ENCODE measurements at regions of chr10 and their contacts with region 1.

Region 1: GRCh38 chr10:29598851-29599311 is 35.9 kb downstream of the SVIL start:
- DNase-seq: no peak
- ATAC-seq: peak; percentile 78
- H3K4me3 ChIP-seq: no peak overlapping the region
- H3K27ac ChIP-seq: peak overlapping the region in 1 of 2 donors; percentile 87
- H3K4me1 ChIP-seq: peaks cover 6 to 12% of the 10 kb centered on the region in 2 donors
- H3K27me3 ChIP-seq: no peaks in the 10 kb centered on the region

Region 2: DNA sequence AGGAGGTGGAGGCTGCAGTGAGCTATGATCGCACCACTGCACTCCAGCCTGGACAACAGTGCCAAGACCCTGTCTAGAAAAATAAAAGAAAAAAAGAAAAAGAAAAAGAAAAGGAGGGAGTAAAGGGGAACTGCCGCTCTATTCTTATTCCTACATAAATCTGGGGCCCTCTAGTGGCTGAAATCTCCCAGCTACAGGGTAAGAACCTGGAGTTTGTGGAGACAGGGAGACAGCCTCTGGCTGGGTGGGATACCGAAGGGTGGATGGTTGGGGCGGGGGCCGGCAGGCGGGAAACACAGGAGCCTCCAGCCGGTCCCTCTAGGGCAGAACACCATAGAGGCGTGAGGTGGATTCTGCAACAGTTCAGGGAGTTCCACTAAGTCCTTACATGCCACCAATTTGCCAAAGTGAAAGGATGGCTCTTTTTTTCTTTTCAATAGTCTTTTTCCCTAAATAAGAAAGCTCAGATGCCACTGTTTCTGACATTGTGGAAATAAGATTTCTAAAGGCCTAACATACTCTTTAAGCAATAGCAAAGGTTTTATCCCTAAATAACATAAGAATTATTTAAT is 81.4 kb before region 1 on chr10:
- intact Hi-C with region 1: loop called in 1 of 2 experiments (anchors 5 kb)
- DNase-seq: no peak
- ATAC-seq: no peak
- H3K4me3 ChIP-seq: no peak overlapping the region
- H3K27ac ChIP-seq: no peak overlapping the region
- H3K4me1 ChIP-seq: peaks cover 0 to 2% of the 10 kb centered on the region in 2 donors
- H3K27me3 ChIP-seq: no peaks in the 10 kb centered on the region

Region 3: DNA sequence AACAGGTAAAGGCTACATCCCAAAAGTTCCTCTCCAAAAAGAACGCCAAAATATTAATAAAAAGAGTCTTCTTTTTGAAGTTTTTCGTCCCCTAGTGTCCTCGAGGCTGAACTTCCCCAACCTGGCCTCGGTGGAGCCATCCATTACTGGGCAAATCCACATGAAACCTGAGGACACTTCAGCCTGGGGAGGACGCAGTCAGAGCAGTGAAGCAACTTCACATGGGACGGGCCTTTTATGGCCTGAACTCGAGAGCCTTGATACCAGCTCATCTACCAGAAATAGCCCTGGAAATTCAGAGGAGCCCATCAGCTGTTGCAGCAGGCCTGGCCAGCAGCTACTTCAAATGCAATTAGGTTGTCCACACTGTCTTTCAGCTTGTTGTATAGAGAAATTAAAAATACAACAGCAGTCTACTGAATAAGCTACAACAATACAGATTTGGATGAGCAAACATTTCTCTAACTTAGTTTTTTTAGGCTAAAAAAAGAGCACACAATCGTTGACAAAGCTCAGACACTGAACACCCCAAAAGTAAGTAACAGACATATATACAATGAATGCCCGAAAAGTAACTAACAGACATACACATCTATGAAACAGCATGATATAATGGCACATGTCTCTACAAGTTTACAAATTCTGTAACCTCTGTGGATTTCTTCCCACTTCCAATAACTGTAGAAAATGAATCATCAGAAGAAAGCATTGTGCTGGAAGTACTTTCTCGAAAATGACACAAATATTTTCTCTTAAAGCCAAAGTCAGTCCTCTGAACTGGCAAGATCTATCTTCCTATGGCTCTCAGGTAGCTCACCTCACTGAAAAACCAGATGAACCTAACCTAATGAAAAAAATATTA is 36.1 kb after region 1 on chr10 and contains the start of gene SVIL:
- intact Hi-C with region 1: loop called in 1 of 2 experiments (anchors 5 kb)
- DNase-seq: peak; percentile 79 to 85
- ATAC-seq: peak; percentile 92
- H3K4me3 ChIP-seq: peak within 1 kb of the TSS; percentile 76 to 95
- H3K27ac ChIP-seq: peak within 1 kb of the TSS; percentile 87 to 95
- H3K4me1 ChIP-seq: peaks cover 4 to 9% of the 10 kb centered on the region in 2 donors
- H3K27me3 ChIP-seq: no peaks in the 10 kb centered on the region
- total RNA-seq, gene SVIL: 319 to 374 TPM